Sigmoid colon (tissue), 7 donors: ENCODE measurements at regions of chr3 and their contacts with region 1.

Region 1: GRCh38 chr3:41598402-41599124 is 363.3 kb downstream of the ULK4 start:
- DNase-seq: peak; percentile 73
- H3K4me3 ChIP-seq: no peak overlapping the region
- H3K27ac ChIP-seq: no peak overlapping the region
- H3K4me1 ChIP-seq: peaks cover 0 to 12% (median 4%) of the 10 kb centered on the region in 4 donors
- H3K27me3 ChIP-seq: no peaks in the 10 kb centered on the region
- CTCF ChIP-seq: no peak
- EP300 ChIP-seq: no peak
- POLR2A ChIP-seq: no peak

Region 2: DNA sequence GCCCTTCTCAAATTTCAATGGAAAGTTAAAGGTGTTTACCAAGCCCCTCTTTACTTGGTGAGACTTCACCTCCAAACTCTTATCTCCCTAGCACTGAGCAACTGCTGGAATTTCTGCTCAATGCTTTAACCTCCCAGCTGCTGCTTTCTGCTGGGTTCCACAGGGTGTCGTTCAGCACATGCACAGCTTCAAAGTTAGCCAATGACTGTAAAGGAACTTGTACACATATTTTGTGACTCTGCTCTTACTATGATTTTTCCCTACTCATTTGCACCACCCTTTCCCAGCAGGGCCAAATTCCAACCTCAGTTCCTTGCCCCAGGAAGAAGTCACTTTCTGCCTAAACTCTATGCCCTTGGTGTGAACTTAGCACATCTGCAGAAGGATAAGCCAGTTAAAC is 273.6 kb after region 1 on chr3:
- intact Hi-C with region 1: loop called (anchors 5 kb)
- DNase-seq: no peak
- H3K4me3 ChIP-seq: no peak overlapping the region
- H3K27ac ChIP-seq: no peak overlapping the region
- H3K4me1 ChIP-seq: peaks cover 0 to 5% (median 0%) of the 10 kb centered on the region in 4 donors
- H3K27me3 ChIP-seq: no peaks in the 10 kb centered on the region
- CTCF ChIP-seq: no peak
- EP300 ChIP-seq: no peak
- POLR2A ChIP-seq: no peak